Activated CD4-positive, alpha-beta memory T cell treated with anti-CD3 and anti-CD28 coated beads, Interleukin-2, amount 10 ng/mL, durations not matched to agents 7 days and 5 days (primary cell): ENCODE measurements at regions of chr6 and their contacts with region 1.

Region 1: GRCh38 chr6:111057074-111057752 is 30.1 kb upstream of the SLC16A10 start:
- DNase-seq: no peak
- H3K4me3 Mint-ChIP-seq: no peak overlapping the region
- H3K27ac Mint-ChIP-seq: no peak overlapping the region
- H3K4me1 Mint-ChIP-seq: no peaks in the 10 kb centered on the region
- H3K27me3 Mint-ChIP-seq: peaks cover 17% of the 10 kb centered on the region

Region 2: DNA sequence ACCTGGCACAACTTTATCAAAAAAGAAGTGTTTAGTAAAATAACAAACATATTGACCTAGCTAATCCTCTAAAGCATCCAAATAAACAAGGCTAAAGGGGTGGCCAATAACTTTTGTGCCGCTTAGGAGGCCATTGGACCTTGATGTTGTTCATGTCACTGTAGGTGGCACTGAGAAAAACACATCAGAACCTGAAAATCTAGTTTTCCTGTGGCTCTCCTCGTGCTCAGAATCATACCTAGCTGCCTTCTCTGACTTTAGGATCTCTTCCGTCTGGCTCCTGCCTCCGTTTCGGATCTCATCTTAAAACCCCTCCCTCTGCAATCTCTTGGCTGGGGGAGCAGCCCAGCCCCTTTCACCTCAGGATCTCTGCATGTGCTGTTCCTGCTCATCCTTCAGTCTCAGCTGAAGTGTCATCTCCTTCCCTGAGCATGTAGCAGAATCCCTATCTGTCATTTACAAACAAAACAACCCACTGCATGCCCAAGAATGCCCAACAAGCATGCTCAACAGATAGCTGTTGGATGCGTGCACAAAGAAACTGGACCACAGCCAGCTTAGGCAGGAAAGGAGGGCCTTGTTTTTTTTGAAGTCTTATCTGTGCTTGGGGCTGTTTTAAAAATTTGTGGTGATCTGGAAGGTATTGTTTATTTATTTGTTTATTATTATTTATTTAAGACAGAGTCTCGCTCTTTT is 11.4 kb after region 1 on chr6:
- CTCF ChIA-PET with region 1: interaction called, 20 read pairs
- POLR2A ChIA-PET with region 1: no interaction called
- DNase-seq: no peak
- H3K4me3 Mint-ChIP-seq: no peak overlapping the region
- H3K27ac Mint-ChIP-seq: no peak overlapping the region
- H3K4me1 Mint-ChIP-seq: no peaks in the 10 kb centered on the region
- H3K27me3 Mint-ChIP-seq: peaks cover 30% of the 10 kb centered on the region

Region 3: GRCh38 chr6:111210194-111210728 is 153.0 kb after region 1 on chr6:
- CTCF ChIA-PET with region 1: interaction called, 41 read pairs
- POLR2A ChIA-PET with region 1: no interaction called
- DNase-seq: peak; percentile 20
- H3K4me3 Mint-ChIP-seq: no peak overlapping the region
- H3K27ac Mint-ChIP-seq: no peak overlapping the region
- H3K4me1 Mint-ChIP-seq: no peaks in the 10 kb centered on the region
- H3K27me3 Mint-ChIP-seq: no peaks in the 10 kb centered on the region